AG04450 (cell line): ENCODE measurements at regions of chr1 and their contacts with region 1.

Region 1: GRCh38 chr1:15178571-15179484 is 25.3 kb downstream of the TMEM51 start:
- DNase-seq: peak; percentile 86
- H3K4me3 ChIP-seq: no peak overlapping the region
- H3K27ac ChIP-seq: peak overlapping the region; percentile 95
- H3K27me3 ChIP-seq: no peaks in the 10 kb centered on the region
- CTCF ChIP-seq: no peak

Region 2: GRCh38 chr1:14915356-14916054 is 263.3 kb before region 1 on chr1:
- CTCF ChIA-PET with region 1: no interaction called
- POLR2A ChIA-PET with region 1: no interaction called
- DNase-seq: no peak
- H3K4me3 ChIP-seq: no peak overlapping the region
- H3K27ac ChIP-seq: no peak overlapping the region
- H3K27me3 ChIP-seq: no peaks in the 10 kb centered on the region
- CTCF ChIP-seq: peak; percentile 95

Region 3: GRCh38 chr1:15168479-15168878 is 10.3 kb before region 1 on chr1:
- CTCF ChIA-PET with region 1: interaction called, 5 read pairs
- POLR2A ChIA-PET with region 1: interaction called, 28 read pairs
- DNase-seq: peak; percentile 86
- H3K4me3 ChIP-seq: no peak overlapping the region
- H3K27ac ChIP-seq: peak overlapping the region; percentile 77
- H3K27me3 ChIP-seq: no peaks in the 10 kb centered on the region
- CTCF ChIP-seq: peak; percentile 27; the same call in 1 of the 2 replicates

Region 4: DNA sequence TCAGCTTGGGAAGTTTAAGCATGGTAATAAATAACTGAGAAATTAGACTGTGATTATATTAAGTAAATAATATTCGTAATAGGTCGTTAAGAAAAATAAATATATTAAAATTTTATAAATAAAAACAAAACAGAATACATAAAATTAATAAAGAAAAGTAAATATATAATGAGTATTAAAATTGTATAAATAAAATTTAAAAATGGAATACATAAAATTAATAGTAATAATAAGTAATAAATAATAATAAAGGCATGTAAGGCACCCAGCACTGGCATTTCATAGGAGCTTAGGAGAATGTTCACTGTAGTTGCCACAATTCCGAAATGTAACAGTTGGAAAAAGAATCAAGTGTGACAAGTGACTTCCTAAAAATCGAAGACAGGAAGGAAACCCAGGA is 22.4 kb after region 1 on chr1:
- CTCF ChIA-PET with region 1: no interaction called
- POLR2A ChIA-PET with region 1: interaction called, 11 read pairs
- DNase-seq: no peak
- H3K4me3 ChIP-seq: no peak overlapping the region
- H3K27ac ChIP-seq: no peak overlapping the region
- H3K27me3 ChIP-seq: no peaks in the 10 kb centered on the region
- CTCF ChIP-seq: no peak